Calu3 (cell line): ENCODE measurements at regions of chr2 and their contacts with region 1.

Region 1: DNA sequence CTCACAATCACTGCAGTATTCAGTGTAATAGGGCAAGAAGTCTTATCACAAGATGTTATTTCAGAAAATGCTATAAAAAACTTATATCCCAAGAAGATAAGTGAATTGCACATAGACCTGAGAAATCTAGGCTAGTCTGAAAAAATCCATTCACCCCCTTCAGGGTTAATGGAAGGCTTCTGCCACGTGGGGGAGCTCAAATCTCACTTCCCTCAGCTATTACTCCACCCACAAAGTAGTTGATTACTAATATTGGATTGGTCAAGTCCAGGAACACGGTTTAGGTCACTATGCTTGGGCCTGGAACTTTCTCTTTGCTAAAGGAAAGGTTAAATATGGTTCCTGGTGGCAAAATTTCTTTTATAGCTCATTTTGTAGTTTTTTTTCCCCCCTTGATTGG is 51.2 kb upstream of the ADAM23 start:
- DNase-seq: peak; percentile 54
- H3K4me3 Mint-ChIP-seq: no peak overlapping the region
- H3K27ac Mint-ChIP-seq: no peak overlapping the region
- H3K4me1 Mint-ChIP-seq: no peaks in the 10 kb centered on the region
- H3K27me3 Mint-ChIP-seq: no peaks in the 10 kb centered on the region
- CTCF ChIP-seq: peak; percentile 55

Region 2: GRCh38 chr2:206693399-206694137 is 301.4 kb after region 1 on chr2:
- CTCF ChIA-PET with region 1: no interaction called
- intact Hi-C with region 1: loop called (anchors 2 kb)
- DNase-seq: peak; percentile 58
- H3K4me3 Mint-ChIP-seq: no peak overlapping the region
- H3K27ac Mint-ChIP-seq: no peak overlapping the region
- H3K4me1 Mint-ChIP-seq: no peaks in the 10 kb centered on the region
- H3K27me3 Mint-ChIP-seq: peaks cover 11% of the 10 kb centered on the region
- CTCF ChIP-seq: peak; percentile 70

Region 3: DNA sequence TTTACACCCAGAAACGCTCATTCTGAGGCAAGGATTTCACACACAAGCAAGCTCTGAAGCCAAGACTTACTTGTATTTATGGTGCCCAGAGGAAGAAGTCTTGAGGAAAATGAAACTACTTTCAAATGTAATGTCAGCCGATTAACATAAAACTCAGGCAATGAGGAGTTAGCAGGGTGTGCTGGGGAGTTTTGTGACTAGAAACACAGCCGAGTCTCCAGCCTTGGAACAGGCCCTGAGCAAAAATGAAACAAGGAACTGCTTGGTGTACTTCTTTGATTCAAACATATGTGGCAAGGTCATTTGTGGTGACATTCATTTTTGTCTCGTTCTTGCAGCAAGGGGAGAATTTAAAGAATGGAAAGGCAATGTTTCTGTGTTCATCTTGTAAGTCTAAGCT is 321.6 kb after region 1 on chr2:
- CTCF ChIA-PET with region 1: no interaction called
- intact Hi-C with region 1: no loop called
- DNase-seq: no peak
- H3K4me3 Mint-ChIP-seq: no peak overlapping the region
- H3K27ac Mint-ChIP-seq: no peak overlapping the region
- H3K4me1 Mint-ChIP-seq: peaks cover 11% of the 10 kb centered on the region
- H3K27me3 Mint-ChIP-seq: peaks cover 13% of the 10 kb centered on the region
- CTCF ChIP-seq: no peak

Region 4: DNA sequence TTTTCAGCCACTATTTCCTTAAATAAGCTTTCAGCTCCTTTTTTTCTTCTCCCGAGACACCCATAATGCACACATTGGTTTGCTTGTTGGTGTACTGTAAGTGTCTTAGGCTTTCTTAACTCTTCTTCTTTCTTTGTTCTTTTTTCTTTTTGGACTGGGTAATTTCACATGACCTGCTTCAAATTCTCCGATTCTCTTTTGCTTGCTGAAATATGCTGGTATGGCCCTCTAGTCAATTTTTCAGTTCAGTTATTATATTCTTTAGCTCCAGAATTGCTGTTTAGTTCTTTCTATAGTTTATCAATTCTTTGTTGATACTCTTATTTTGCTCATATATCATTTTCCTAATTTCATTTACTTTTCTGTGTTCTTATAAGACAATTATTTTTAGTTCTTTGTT is 388.6 kb after region 1 on chr2:
- CTCF ChIA-PET with region 1: interaction called, 8 read pairs
- intact Hi-C with region 1: loop called (anchors 2 kb)
- DNase-seq: no peak
- H3K4me3 Mint-ChIP-seq: no peak overlapping the region
- H3K27ac Mint-ChIP-seq: no peak overlapping the region
- H3K4me1 Mint-ChIP-seq: no peaks in the 10 kb centered on the region
- H3K27me3 Mint-ChIP-seq: no peaks in the 10 kb centered on the region
- CTCF ChIP-seq: no peak

Region 5: DNA sequence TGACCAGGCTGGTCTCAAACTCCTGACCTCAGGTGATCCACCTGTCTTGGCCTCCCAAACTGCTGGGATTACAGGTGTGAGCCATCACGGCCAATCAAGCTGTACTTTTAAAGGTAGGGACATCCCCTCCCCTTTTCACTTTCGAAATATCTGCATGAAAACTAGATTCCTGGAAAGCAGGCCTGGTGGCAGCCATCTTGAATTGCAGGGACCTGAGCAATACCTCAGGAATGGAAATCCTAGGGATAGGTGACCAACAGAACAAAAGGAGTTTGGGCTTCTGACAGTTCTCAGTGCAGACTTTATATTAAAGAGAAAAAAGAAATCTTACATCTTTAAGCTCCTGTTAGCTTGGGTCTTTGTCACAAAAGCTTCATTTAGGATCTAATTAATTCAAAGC is 711.0 kb after region 1 on chr2:
- CTCF ChIA-PET with region 1: no interaction called
- intact Hi-C with region 1: no loop called
- DNase-seq: no peak
- H3K4me3 Mint-ChIP-seq: no peak overlapping the region
- H3K27ac Mint-ChIP-seq: no peak overlapping the region
- H3K4me1 Mint-ChIP-seq: no peaks in the 10 kb centered on the region
- H3K27me3 Mint-ChIP-seq: no peaks in the 10 kb centered on the region
- CTCF ChIP-seq: no peak